Activated CD8-positive, alpha-beta memory T cell treated with anti-CD3 and anti-CD28 coated beads, Interleukin-2, amount 10 ng/mL, durations not matched to agents 7 days and 5 days (primary cell): ENCODE measurements at regions of chr16 and their contacts with region 1.

Region 1: GRCh38 chr16:3023669-3024478 is at the starts of genes HCFC1R1 and THOC6:
- DNase-seq: peak; percentile 98
- ATAC-seq: peak; percentile 80
- H3K4me3 Mint-ChIP-seq: peak within 1 kb of the TSS; percentile 75
- H3K27ac Mint-ChIP-seq: peak within 1 kb of the TSS; percentile 92
- H3K4me1 Mint-ChIP-seq: peaks cover 53% of the 10 kb centered on the region
- H3K27me3 Mint-ChIP-seq: peaks cover 7% of the 10 kb centered on the region
- total RNA-seq, gene HCFC1R1: 31.8 to 34.3 TPM
- total RNA-seq, gene THOC6: 45.6 to 51.5 TPM

Region 2: GRCh38 chr16:2936436-2937011 is 87.3 kb before region 1 on chr16:
- CTCF ChIA-PET with region 1: no interaction called
- DNase-seq: no peak
- ATAC-seq: no peak
- H3K4me3 Mint-ChIP-seq: no peak overlapping the region
- H3K27ac Mint-ChIP-seq: no peak overlapping the region
- H3K4me1 Mint-ChIP-seq: no peaks in the 10 kb centered on the region
- H3K27me3 Mint-ChIP-seq: no peaks in the 10 kb centered on the region

Region 3: DNA sequence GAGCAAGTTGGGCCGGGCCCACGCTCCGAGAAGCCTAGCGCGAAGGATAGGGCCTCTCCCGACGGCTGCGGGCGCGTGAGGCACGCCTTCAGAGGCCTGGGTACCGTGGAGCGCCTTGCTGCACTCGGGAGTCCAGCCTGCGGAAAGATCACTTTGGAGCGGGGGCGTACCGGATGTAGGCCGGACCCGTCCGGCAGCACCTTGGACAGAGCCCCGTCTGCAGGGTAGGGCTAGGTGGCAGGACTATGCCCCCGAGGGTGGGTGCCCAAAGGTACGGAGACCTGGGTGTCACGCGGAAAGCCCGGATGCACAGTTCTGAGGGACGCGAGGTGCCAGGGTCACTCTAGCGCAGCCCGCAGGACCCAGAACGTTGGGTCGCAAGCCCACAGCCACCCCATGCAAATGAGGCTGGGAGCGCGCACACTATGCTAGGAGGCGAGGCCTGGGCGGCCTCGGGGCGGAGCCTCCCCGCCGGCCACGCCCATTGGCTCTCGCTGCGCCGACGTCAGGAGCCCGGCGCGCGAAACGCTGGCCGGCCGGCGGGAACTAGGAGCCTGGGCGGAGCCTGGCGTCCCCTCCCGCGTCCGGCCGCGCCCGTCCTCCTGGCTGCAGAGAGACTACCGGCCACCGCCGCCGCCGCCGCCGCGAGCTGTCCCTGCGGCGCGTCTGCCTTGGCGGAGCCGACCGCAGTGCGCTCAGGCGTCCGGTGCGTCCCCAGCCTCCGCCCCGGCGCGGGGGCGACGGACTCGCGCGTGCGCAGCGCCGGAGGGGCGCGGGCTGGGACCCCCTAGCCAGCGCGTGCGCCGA is 54.9 kb before region 1 on chr16 and contains the start of gene PAQR4:
- CTCF ChIA-PET with region 1: interaction called, 10 read pairs
- DNase-seq: peak; percentile 89
- ATAC-seq: peak; percentile 75
- H3K4me3 Mint-ChIP-seq: peak within 1 kb of the TSS; percentile 73
- H3K27ac Mint-ChIP-seq: peak within 1 kb of the TSS; percentile 77
- H3K4me1 Mint-ChIP-seq: peaks cover 38% of the 10 kb centered on the region
- H3K27me3 Mint-ChIP-seq: peaks cover 18% of the 10 kb centered on the region
- total RNA-seq, gene PAQR4: 58.7 to 62.9 TPM

Region 4: DNA sequence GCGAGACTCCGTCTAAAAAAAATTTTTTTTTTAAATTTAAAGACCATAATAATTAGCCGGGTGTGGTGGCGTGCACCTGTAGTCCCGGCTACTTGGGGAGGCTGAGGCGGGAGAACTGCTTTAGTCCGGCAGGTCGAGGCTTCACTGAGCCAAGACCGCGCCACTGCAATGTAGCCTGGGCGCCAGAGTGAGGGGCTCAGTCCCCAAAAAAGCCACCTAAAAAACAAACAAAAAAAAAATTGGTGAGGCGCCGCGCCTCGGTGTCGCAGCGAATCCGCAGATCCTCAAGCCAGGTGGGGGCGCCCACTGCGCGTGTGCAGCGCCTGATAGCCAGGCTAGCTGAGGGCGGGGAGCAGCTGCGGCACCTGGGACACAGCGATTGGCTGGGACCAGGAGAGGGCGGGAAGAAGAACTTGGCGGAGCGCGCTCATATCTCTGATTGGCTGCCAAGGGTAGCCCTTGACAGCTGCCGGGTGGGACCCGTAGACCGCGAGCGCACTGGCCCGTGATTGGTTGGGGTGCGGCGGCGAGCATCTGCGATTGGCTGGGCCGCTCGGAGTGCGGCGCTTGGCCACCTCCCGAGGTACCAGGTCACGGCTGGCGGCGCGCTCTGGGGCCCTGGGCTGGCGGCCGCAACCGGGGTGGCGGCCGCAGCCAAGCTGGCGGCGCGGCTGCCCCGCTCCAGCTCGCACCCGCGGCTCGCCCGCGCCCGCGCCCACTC is 20.1 kb before region 1 on chr16:
- CTCF ChIA-PET with region 1: interaction called, 370 read pairs
- DNase-seq: peak; percentile 99
- ATAC-seq: peak; percentile 99
- H3K4me3 Mint-ChIP-seq: peak overlapping the region; percentile 45
- H3K27ac Mint-ChIP-seq: no peak overlapping the region
- H3K4me1 Mint-ChIP-seq: peaks cover 31% of the 10 kb centered on the region
- H3K27me3 Mint-ChIP-seq: peaks cover 33% of the 10 kb centered on the region

Region 5: GRCh38 chr16:3045357-3045728 is 21.5 kb after region 1 on chr16:
- CTCF ChIA-PET with region 1: interaction called, 342 read pairs
- DNase-seq: peak; percentile 74
- ATAC-seq: peak; percentile 41
- H3K4me3 Mint-ChIP-seq: peak overlapping the region; percentile 88
- H3K27ac Mint-ChIP-seq: peak overlapping the region; percentile 83
- H3K4me1 Mint-ChIP-seq: peaks cover 40% of the 10 kb centered on the region
- H3K27me3 Mint-ChIP-seq: peaks cover 11% of the 10 kb centered on the region

Region 6: DNA sequence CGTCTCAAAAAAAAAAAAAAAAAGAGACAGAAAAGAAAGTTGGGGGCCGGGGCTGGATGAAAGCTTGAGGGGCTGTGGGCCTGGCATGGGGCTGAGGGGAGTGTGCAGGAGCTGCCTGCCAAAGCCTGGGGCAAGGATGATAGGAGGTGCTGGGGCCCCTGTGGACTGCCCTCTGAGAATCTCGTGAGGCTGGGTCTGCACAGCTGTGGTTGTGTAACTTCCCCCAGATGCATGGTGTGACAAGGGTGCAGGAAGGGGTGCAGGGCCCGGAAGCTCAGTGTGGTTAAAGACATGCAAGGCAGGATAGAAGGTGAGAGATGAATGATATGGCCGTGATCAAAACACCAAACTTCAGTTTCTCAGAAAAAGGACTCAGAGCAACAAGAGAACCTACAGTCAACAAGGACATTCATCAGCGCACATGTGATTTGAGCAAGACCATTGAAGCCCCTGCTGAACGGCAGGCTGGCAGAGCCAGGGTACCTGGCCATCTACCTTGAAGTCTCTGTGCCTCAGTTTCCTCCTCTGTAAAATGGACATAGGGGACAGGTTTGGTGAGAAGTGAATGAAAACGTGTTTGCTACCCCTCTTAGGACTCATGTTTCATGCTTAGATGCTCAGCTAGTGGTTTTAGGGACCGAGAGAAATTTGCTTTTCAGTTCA is 51.1 kb after region 1 on chr16:
- CTCF ChIA-PET with region 1: interaction called, 14 read pairs
- DNase-seq: peak; percentile 97
- ATAC-seq: peak; percentile 72
- H3K4me3 Mint-ChIP-seq: peak overlapping the region; percentile 79
- H3K27ac Mint-ChIP-seq: peak overlapping the region; percentile 94
- H3K4me1 Mint-ChIP-seq: peaks cover 90% of the 10 kb centered on the region
- H3K27me3 Mint-ChIP-seq: no peaks in the 10 kb centered on the region

Region 7: DNA sequence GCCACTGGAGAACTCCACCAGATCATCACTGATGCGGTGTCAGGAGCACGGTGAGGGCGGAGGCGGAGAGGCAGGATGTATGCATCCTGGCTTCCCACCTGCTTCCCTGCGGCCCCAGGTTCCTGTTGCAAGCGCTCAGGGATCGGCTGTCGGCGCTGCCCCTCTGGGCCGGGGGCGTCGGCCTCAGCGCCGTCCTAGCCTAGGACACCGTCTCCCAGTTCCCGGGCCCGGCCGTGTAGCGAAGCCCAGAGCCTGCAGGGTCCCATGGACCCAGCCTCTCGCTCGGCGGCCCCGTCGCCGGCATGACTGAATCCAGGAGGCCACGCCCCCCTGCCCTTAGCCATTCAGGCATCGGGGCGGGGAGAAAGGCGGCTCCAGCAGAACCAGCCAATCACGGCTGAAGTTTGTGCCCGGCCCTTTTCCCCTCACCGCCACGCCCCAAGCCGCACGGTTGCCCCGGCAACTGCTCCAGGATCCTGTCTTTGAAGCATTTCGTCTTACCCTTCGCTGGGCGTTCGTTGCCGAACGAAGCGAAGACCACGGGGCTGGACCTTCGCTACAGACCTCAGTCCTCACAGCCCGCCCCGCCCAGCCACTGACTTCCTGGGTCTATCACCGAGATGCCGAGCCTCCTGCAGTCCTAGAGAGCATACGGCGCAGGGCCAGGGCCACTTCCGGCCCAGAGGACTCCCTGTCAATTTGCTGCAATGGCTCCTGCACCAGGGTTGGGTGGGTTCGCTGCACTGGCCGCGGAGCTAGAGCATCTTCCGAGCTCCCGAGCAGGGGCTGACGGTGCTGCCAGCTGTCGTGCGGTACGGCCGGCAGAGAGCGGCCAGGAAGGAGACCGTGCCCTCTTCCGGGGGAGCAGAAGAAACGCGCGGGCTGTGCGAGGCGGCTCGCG is 100.4 kb after region 1 on chr16:
- CTCF ChIA-PET with region 1: interaction called, 185 read pairs
- DNase-seq: peak; percentile 99
- ATAC-seq: peak; percentile 88
- H3K4me3 Mint-ChIP-seq: peak overlapping the region; percentile 98
- H3K27ac Mint-ChIP-seq: peak overlapping the region; percentile 99
- H3K4me1 Mint-ChIP-seq: peaks cover 49% of the 10 kb centered on the region
- H3K27me3 Mint-ChIP-seq: no peaks in the 10 kb centered on the region

Region 8: DNA sequence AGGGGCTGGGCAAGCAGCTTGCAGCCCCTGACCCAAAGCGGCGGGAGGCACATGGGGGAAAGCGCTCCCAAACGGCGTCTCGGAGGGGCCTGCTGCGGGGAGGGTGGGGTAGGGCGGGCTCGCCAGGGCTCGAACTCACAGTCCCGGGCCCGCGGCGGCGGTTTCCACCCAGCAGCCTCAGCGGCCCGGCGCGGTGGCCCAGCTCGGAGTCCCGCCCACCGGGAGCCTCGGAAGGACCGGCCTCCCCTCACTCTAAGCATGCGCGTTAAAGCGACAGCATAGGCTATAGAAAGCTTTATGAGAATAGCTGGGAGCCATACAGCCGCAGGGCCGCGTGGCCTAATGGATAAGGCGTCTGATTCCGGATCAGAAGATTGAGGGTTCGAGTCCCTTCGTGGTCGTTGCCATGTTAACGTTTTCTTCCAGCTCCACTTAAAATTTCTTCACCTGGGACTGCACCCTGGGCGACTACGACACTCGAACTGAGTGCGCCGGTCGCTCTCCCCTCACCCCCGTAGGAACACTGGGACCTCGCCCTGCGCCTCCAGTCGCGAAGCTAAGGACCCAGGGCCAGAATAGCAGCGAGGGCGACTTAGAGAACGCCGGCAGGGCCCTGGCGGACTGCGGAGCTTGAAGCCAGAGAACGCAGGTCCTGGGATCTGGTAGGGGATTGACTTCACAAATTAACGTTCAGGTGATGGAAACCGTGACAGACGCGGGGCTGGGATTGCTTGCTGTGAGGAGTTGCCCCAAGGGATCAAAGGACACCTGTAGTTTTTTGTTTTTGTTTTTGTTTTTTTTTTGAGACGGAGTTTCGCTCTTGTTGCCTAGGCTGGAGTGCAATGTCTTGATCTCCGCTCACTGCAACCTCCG is 126.7 kb after region 1 on chr16:
- CTCF ChIA-PET with region 1: interaction called, 10 read pairs
- DNase-seq: peak; percentile 99
- ATAC-seq: peak; percentile 86
- H3K4me3 Mint-ChIP-seq: peak overlapping the region; percentile 82
- H3K27ac Mint-ChIP-seq: peak overlapping the region; percentile 90
- H3K4me1 Mint-ChIP-seq: peaks cover 32% of the 10 kb centered on the region
- H3K27me3 Mint-ChIP-seq: peaks cover 21% of the 10 kb centered on the region